Transverse colon (tissue), 4 donors: ENCODE measurements at regions of chr19 and their contacts with region 1.

Region 1: DNA sequence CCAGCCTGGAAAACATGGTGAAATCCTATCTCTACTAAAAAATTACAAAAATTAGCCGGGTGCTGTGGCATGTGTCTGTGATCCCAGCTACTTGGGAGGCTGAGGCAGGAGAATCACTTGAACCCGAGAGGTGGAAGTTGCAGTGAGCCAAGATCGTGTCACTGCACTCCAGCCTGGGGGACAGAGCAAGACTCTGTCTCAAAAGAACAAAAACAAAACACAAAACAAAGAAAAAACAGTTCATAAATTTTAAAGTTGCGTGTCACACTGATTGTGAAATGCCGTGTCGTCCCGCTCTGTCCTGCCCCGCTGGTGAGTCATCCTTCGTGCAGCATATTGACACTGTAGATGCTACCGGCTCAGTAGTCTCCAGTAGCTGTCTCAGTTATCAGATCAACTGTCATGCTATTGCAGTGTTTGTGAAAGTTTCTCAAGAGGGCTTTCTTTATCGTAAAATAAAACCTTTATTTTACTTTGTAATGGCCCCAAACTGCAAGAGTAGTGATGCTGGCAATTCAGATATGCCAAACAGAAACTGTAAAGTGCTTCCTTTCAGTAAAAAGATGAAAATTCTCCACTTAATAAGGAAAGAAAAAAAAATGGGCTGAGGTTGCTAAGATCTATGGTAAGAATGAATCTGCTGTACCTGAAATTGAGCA is 36.4 kb upstream of the IGFL1 start:
- DNase-seq: no peak
- H3K4me3 ChIP-seq: no peak overlapping the region
- H3K27ac ChIP-seq: no peak overlapping the region
- H3K4me1 ChIP-seq: no peaks in the 10 kb centered on the region
- H3K27me3 ChIP-seq: peaks cover 67% of the 10 kb centered on the region
- CTCF ChIP-seq: no peak
- EP300 ChIP-seq: no peak
- POLR2A ChIP-seq: no peak

Region 2: DNA sequence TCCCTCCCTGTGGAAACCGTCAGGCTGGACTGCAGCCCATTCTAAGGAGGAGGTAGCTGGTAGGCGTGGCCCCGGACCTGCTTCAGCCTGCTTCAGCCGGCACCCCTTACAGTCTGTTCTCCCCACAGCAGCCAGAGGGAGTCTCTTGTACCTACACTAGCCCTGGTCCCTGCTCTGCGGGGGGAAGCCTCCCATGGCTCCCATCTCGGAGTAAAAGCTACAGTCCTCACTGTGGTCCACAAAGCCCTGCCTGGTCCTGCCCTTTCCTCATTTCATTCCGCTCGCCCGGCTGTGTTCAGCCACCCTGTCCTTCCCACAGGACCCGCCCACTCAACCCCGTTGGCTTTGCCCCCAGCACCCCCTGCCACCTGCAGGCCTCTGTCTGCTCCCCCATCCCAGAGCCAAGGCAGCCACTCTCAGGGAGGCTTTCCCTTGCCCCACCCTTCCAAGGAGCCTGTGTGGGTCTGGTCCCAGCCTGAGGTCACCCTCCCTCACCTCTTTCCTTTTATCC is 171.5 kb before region 1 on chr19:
- in situ Hi-C with region 1: loop called in 1 of 4 experiments (anchors 10 kb)
- intact Hi-C with region 1: no loop called
- DNase-seq: peak; percentile 29
- H3K4me3 ChIP-seq: no peak overlapping the region
- H3K27ac ChIP-seq: no peak overlapping the region
- H3K4me1 ChIP-seq: peaks cover 0 to 7% (median 2%) of the 10 kb centered on the region in 4 donors
- H3K27me3 ChIP-seq: peaks cover 49% of the 10 kb centered on the region
- CTCF ChIP-seq: no peak
- EP300 ChIP-seq: no peak
- POLR2A ChIP-seq: no peak

Region 3: DNA sequence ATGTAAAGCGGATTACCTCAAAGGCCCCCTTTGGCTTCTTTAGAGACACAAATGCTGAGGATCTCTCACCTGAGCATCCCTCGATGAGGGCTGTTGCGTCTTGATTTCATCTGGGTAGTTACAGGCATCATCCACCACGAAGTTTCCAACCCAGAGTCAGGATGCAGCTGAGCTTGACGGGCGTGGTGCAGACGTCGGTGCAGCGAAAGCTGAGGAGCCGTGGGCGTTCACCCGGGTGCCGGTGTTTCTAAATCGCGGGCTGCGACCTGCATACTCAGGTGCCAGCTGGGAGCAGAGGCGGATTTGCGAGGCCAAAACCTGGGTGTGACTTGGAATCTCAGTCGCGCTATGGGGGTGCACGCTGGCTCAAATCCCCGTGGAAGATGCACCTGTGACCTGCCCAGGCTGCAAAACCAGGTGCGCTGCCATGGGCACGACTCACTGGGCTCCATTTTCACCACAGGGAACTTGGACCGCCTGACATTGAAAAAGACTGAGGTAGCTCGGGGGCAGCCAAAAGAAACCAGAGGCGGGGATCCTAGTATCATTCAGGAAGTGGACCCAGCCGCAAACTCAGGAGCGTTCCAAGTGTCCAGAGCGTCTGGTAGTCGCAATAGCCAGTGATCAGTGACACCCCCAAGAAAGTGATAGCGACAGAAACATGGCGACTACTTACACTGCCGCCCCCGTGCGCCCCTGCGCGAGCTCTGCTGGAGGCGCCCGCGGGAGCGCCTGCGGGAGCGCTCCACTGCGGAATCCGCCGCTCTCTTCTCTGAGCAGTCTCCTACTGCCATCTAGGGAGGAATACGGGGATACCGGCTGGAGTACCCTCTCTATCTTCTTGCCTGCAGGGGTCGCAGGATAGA is 115.9 kb before region 1 on chr19:
- in situ Hi-C with region 1: loop called in 3 of 4 experiments (anchors 5 to 10 kb)
- intact Hi-C with region 1: no loop called
- DNase-seq: peak; percentile 57
- H3K4me3 ChIP-seq: peak overlapping the region in 3 of 4 donors; percentile 15 to 43 (median 16)
- H3K27ac ChIP-seq: no peak overlapping the region
- H3K4me1 ChIP-seq: peaks cover 0 to 14% (median 8%) of the 10 kb centered on the region in 4 donors
- H3K27me3 ChIP-seq: peaks cover 62% of the 10 kb centered on the region
- CTCF ChIP-seq: peak; percentile 62 to 85 (median 79)
- EP300 ChIP-seq: no peak
- POLR2A ChIP-seq: no peak

Region 4: DNA sequence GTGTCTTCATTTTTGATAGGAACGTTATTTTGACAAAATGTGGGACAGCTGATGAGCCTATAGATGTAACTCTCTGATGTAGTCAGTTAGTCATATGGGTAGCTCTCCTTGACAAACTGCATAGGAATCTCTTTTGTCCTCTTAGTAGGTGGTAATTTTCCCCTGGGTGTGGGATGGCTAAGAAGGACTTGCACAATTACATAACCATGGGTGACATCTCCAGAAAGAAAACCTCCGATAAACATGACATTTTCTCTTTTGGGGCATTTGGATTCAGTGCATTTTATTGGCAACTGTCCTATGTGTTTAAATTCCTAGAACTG is 110.4 kb before region 1 on chr19:
- in situ Hi-C with region 1: loop called (anchors 5 to 10 kb)
- intact Hi-C with region 1: loop called (anchors 1 kb)
- DNase-seq: no peak
- H3K4me3 ChIP-seq: no peak overlapping the region
- H3K27ac ChIP-seq: no peak overlapping the region
- H3K4me1 ChIP-seq: peaks cover 0 to 4% (median under 1%) of the 10 kb centered on the region in 4 donors
- H3K27me3 ChIP-seq: peaks cover 37% of the 10 kb centered on the region
- CTCF ChIP-seq: no peak
- EP300 ChIP-seq: no peak
- POLR2A ChIP-seq: no peak

Region 5: GRCh38 chr19:46088101-46088500 is 105.0 kb before region 1 on chr19:
- in situ Hi-C with region 1: loop called (anchors 5 to 10 kb)
- intact Hi-C with region 1: loop called (anchors 1 kb)
- DNase-seq: no peak
- H3K4me3 ChIP-seq: no peak overlapping the region
- H3K27ac ChIP-seq: no peak overlapping the region
- H3K4me1 ChIP-seq: no peaks in the 10 kb centered on the region
- H3K27me3 ChIP-seq: peaks cover 9% of the 10 kb centered on the region
- CTCF ChIP-seq: no peak
- EP300 ChIP-seq: no peak
- POLR2A ChIP-seq: no peak

Region 6: DNA sequence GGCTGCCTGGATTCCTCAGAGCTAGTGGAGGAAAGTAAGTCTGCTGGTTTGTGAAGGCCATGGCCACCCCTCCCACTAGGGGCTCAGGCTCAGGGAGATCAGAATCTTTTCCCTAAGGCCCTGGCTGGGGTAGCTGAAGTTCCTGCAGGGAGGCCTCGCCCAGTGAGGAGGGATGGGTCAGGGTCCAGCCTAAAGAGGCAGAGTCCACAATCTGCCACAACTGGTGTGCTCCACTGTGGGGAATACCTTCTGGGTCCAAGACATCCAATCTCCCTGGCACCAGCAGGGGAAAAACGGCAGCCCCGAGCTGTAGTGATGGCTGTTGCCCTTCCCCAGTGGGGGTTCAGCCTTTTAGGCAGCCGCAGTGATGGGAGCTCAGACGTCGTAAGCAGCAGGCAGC is 91.8 kb before region 1 on chr19:
- in situ Hi-C with region 1: no loop called
- intact Hi-C with region 1: no loop called
- DNase-seq: no peak
- H3K4me3 ChIP-seq: no peak overlapping the region
- H3K27ac ChIP-seq: no peak overlapping the region
- H3K4me1 ChIP-seq: no peaks in the 10 kb centered on the region
- H3K27me3 ChIP-seq: peaks cover 31% of the 10 kb centered on the region
- CTCF ChIP-seq: no peak
- EP300 ChIP-seq: no peak
- POLR2A ChIP-seq: no peak